K562 (cell line): ENCODE measurements at regions of chr10 and their contacts with region 1.

Region 1: DNA sequence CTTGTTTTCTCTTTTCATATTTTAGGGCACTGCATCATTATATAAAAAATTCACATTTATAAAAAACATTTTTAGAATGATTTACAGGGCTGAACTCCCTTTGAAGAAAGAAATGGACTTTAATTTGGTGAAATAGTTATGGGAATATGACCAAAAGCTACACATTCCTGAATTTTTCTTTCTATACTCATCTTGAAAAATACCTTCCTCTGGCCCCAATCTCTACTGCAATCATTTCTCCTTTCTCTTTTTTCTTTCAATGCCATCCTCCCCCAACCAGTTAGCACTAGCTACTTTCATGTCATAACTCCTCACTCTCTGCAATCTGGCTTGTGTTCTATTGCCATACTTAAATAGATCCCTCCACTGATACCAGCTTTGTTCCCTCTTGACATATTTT is 6.2 kb downstream of the WNT8B start:
- DNase-seq: no peak
- ATAC-seq: no peak
- H3K4me3 ChIP-seq: no peak overlapping the region
- H3K27ac ChIP-seq: no peak overlapping the region
- H3K4me1 ChIP-seq: no peaks in the 10 kb centered on the region
- H3K27me3 ChIP-seq: peaks cover 0 to 7% of the 10 kb centered on the region in 2 experiments; a peak in 2 of 5 replicates
- CTCF ChIP-seq: no peak
- EP300 ChIP-seq: no peak
- POLR2A ChIP-seq: no peak
- RAD21 ChIP-seq: no peak

Region 2: DNA sequence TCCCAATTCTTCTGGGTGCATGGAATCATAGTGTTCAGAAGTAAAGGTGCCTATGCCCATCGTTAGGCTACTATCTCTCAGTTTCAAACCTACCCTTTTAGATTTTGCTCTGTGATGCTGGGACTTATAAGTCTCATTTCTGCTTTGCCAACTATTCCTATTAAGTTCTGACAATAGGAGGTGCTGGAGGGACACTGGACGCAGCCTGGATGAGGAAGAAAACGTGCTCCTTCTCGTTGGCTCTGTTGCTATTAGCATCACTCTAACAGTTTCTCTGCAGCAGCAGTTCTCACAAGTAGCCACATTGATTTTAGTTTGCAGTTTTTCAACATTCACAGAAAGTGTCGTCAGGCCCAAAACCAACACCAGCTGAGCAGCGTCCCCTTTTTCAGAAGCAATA is 614.1 kb before region 1 on chr10:
- CTCF ChIA-PET with region 1: no interaction called
- POLR2A ChIA-PET with region 1: no interaction called
- in situ Hi-C with region 1: no loop called
- intact Hi-C with region 1: no loop called
- DNase-seq: peak in 2 of 4 experiments; percentile 16 to 24
- ATAC-seq: no peak
- H3K4me3 ChIP-seq: no peak overlapping the region
- H3K27ac ChIP-seq: no peak overlapping the region
- H3K4me1 ChIP-seq: no peaks in the 10 kb centered on the region
- H3K27me3 ChIP-seq: peaks cover 16 to 24% of the 10 kb centered on the region in 2 experiments; a peak in 4 of 5 replicates
- CTCF ChIP-seq: peak; percentile 39 to 49 (median 49)
- EP300 ChIP-seq: no peak
- POLR2A ChIP-seq: no peak
- RAD21 ChIP-seq: peak; percentile 24 to 60; a peak in 2 of 4 replicates

Region 3: DNA sequence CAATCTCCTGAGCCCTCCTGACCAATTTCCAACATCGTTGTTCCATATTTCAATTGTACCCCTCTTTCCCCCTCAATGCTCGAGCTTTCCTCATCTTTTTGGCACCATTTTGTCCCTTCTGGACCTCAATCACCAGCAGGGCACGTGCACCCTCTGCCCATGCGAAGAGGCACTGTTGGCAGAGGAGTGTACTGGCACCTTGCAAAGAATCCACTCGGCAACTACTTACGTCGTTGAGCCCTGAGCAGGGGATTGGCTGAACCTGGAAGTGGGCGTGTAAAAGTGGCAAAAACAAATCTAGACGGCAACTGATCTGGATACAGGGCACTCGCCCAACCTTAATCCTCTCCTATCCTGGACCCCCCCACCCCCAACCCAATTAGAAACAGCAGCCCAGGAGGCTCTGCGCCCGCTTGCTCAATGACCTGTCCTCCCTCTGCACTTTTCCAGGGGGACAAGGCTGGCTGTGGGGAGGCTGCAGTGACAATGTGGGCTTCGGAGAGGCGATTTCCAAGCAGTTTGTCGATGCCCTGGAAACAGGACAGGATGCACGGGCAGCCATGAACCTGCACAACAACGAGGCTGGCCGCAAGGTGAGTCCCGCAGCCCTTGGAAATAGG is 12.6 kb after region 1 on chr10:
- CTCF ChIA-PET with region 1: no interaction called
- POLR2A ChIA-PET with region 1: interaction called, 12 read pairs
- in situ Hi-C with region 1: no loop called
- intact Hi-C with region 1: no loop called
- DNase-seq: peak; percentile 64 to 79 (median 75)
- ATAC-seq: peak; percentile 95
- H3K4me3 ChIP-seq: no peak overlapping the region
- H3K27ac ChIP-seq: no peak overlapping the region
- H3K4me1 ChIP-seq: peaks cover 0 to 8% of the 10 kb centered on the region in 2 experiments; a peak in 3 of 5 replicates
- H3K27me3 ChIP-seq: peaks cover 9 to 23% of the 10 kb centered on the region in 2 experiments; a peak in 4 of 5 replicates
- CTCF ChIP-seq: no peak
- EP300 ChIP-seq: no peak
- POLR2A ChIP-seq: no peak
- RAD21 ChIP-seq: no peak